Gastrocnemius medialis (tissue), 4 donors: ENCODE measurements at regions of chr12 and their contacts with region 1.

Region 1: GRCh38 chr12:120469450-120470149 is at the start of gene SRSF9:
- DNase-seq: peak; percentile 92 to 95
- ATAC-seq: peak; percentile 90 to 96
- H3K4me3 ChIP-seq: peak within 1 kb of the TSS; percentile 82 to 99 (median 90)
- H3K27ac ChIP-seq: peak within 1 kb of the TSS; percentile 87 to 93 (median 90)
- H3K4me1 ChIP-seq: peaks cover 15 to 32% of the 10 kb centered on the region in 2 donors
- H3K27me3 ChIP-seq: no peaks in the 10 kb centered on the region
- CTCF ChIP-seq: peak; percentile 85 to 96 (median 90)
- POLR2A ChIP-seq: peak; percentile 74 to 87
- total RNA-seq, gene SRSF9: 13.5 to 18.6 (median 16.0) TPM

Region 2: GRCh38 chr12:120445911-120446843 is 23.4 kb before region 1 on chr12 and contains the starts of genes GATC and TRIAP1:
- in situ Hi-C with region 1: no loop called
- intact Hi-C with region 1: loop called (anchors 2 kb)
- DNase-seq: peak; percentile 57 to 75
- ATAC-seq: peak; percentile 96 to 97
- H3K4me3 ChIP-seq: peak within 1 kb of the TSS; percentile 85 to 96 (median 94)
- H3K27ac ChIP-seq: peak within 1 kb of the TSS; percentile 82 to 96 (median 88)
- H3K4me1 ChIP-seq: peaks cover 19 to 20% of the 10 kb centered on the region in 2 donors
- H3K27me3 ChIP-seq: no peaks in the 10 kb centered on the region
- CTCF ChIP-seq: peak in 1 of 5 experiments; percentile 39
- POLR2A ChIP-seq: peak; percentile 50 to 73
- total RNA-seq, gene GATC: 14.5 to 20.7 (median 18.4) TPM
- total RNA-seq, gene TRIAP1: 14.4 to 33.7 (median 28.0) TPM

Region 3: DNA sequence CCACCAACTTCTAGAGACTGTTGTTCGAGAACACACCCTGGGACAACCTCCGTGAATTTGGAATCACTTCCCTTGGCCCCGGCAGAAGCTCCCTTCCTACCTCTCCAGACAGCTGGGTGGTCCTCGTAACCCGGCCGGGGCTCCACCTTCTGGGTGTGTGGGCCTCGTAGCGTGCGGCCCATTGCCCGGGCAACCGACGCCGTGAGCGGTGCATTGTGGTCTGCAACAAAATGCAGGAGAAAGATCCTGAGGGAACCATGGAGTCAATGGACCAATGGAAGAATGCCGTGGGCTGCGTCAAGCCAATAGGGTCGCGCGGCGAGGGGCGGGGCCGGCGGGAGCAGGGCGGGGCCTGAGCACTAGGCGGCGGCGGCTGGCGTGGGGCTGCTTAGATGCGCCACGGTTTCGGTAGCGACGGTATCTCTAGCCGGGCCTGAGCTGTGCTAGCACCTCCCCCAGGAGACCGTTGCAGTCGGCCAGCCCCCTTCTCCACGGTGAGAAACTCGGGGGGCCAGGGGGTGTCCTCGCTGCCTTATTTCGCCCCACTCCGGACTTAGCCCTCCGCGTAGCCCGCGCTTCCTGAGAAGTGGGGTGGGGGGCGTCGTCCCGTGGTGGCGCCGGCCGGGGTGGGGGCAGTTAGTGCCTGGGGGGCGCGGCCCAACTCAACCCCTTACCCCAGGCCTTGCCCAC is 26.3 kb after region 1 on chr12 and contains the start of gene DYNLL1:
- in situ Hi-C with region 1: no loop called
- intact Hi-C with region 1: loop called (anchors 1 kb)
- DNase-seq: peak; percentile 92 to 96
- ATAC-seq: peak; percentile 98
- H3K4me3 ChIP-seq: peak within 1 kb of the TSS; percentile 66 to 100 (median 86)
- H3K27ac ChIP-seq: peak within 1 kb of the TSS; percentile 84 to 92 (median 85)
- H3K4me1 ChIP-seq: peaks cover 25 to 28% of the 10 kb centered on the region in 2 donors
- H3K27me3 ChIP-seq: no peaks in the 10 kb centered on the region
- CTCF ChIP-seq: peak in 1 of 5 experiments; percentile 25
- POLR2A ChIP-seq: peak; percentile 79 to 89
- total RNA-seq, gene DYNLL1: 16.7 to 45.0 (median 32.6) TPM